ENCODE measurements at regions of chr1 and their contacts with region 1.

Region 1: GRCh38 chr1:16607433-16607851 is 5.9 kb downstream of the NBPF1 start:
- DNase-seq: peak; percentile 21
- ATAC-seq: no peak
- H3K4me3 Mint-ChIP-seq: no peak overlapping the region
- H3K27ac Mint-ChIP-seq: no peak overlapping the region
- H3K4me1 Mint-ChIP-seq: no peaks in the 10 kb centered on the region
- H3K27me3 Mint-ChIP-seq: no peaks in the 10 kb centered on the region

Region 2: DNA sequence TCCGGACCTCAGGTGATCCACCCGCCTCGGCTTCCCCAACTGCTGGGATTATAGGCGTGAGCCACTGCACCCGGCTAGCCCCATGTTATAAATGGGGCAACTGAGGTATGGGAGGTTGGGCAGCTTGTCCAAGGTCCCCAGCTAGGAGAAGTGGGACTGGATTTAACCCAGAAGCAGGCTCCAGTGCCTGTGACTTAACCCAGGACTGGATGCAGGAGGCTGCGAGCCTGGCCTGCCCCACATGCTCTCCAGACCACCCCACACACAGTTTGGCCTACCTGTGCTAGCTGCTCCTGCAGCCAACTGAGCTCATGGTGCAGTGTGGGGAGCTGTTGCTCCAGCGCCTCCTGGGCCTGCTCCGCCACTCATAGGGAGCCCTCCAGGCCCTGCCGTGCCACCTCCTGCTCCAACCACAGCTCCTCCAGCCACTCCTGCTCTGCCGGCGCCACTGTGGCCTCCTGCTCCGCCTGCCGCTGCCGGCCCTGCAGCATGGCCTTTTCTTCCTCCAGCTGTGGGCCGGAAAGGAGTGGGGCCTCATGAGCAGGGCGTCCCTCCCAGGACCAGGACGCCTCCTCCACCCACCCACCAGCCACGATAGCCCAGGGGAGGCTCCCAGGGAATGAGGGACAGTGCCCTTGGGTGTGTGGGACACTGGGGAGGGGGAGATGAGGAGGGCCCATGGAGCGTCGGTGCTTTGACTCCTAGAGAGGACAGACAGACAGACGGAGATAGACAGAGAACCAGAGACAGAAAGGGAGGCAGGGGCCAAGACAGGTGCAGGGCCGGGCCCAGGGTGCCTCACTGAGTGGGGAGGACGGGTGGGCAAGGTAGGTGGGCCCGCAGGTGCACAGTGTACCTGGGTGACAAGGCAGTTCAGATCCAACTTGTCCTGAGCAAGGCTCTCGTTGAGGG is 18.3 kb after region 1 on chr1:
- CTCF ChIA-PET with region 1: interaction called, 14 read pairs
- POLR2A ChIA-PET with region 1: no interaction called
- DNase-seq: no peak
- ATAC-seq: no peak
- H3K4me3 Mint-ChIP-seq: no peak overlapping the region
- H3K27ac Mint-ChIP-seq: no peak overlapping the region
- H3K4me1 Mint-ChIP-seq: peaks cover 8% of the 10 kb centered on the region
- H3K27me3 Mint-ChIP-seq: no peaks in the 10 kb centered on the region